A549 (cell line): ENCODE measurements at regions of chr11 and their contacts with region 1.

Region 1: GRCh38 chr11:44556735-44557409 is 8.6 kb upstream of the CD82 start:
- DNase-seq: peak in 1 of 2 experiments; percentile 64
- ATAC-seq: peak; percentile 73 to 94; a peak in 4 of 6 replicates
- H3K4me3 ChIP-seq: no peak overlapping the region
- H3K27ac ChIP-seq: no peak overlapping the region
- H3K4me1 ChIP-seq: no peaks in the 10 kb centered on the region
- CTCF ChIP-seq: peak; percentile 83
- EP300 ChIP-seq: no peak
- POLR2A ChIP-seq: no peak
- RAD21 ChIP-seq: peak; percentile 91 to 93

Region 2: DNA sequence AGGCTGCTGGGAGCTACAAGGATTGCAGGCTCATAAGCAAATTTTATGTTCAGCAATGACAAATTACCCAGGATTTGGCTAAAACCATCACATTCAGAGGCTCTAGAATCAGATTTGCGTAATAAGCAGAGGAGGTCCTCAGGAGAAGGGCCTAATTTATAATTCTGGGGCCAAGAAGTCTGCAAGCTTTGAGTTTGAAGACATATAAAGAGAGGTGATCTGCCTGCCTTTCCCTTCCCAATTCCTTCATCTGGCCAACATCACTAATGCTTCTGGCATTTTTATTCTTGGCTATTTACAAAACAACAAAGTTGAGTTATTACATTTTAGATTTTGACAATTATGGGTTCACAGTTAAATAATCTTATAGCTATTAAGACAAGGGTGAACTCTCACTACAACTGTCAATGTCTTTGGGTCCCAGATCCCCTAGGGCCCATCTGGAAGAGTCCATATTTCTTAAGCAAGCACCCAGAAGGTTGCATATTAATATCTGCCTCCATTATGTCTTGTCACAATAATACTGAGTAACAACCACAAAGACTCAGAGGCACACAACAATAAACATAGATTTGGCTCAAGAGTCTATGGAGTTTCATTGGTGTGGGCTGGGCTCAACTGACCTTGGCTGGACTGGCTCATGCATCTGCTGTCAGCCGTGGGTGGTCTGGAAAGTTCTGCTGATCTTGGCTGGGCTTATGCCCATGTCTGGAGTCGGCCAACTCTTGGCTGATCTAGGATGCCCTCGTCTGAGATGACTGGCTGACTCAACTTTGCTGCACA is 58.6 kb before region 1 on chr11:
- CTCF ChIA-PET with region 1: no interaction called
- POLR2A ChIA-PET with region 1: no interaction called
- DNase-seq: no peak
- ATAC-seq: no peak
- H3K4me3 ChIP-seq: no peak overlapping the region
- H3K27ac ChIP-seq: no peak overlapping the region
- H3K4me1 ChIP-seq: no peaks in the 10 kb centered on the region
- CTCF ChIP-seq: no peak
- EP300 ChIP-seq: no peak
- POLR2A ChIP-seq: no peak
- RAD21 ChIP-seq: no peak

Region 3: DNA sequence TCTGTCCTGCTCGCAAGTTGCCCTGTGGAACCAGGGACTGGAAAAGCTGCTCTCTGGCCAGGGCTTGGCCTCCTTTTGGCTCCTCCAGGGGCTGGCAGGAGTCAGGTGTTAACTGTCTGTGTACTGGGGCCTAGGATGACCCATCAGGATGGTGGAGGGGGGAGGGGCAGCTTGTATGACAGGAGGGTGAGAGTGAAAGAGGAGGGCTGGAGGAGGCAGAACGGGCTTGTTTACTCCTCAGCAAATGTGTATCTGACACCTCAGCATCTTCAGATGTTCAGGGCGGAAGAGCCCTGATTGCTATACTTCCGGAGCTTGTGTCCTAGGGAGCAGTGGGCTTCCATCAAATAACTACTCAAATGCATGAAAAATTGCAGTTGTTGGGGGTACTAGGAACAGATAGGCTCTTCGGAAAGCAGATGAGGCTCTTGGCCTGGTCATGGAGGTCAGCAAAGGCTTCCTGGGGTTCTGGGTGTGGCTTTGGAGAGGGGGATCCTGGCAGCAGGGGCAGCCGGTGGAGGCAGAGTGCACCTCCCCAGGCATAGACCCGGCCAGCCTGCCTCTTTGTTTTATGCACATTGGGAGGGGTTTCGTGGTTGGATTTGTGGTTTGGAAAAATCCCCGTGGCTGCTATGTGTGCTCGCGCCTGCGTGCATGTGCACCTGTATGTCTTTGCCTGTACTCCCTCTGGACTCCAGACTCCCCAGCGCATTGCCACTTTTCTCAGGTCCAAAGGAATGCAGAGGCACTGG is 39.8 kb after region 1 on chr11:
- CTCF ChIA-PET with region 1: interaction called, 40 read pairs
- POLR2A ChIA-PET with region 1: no interaction called
- DNase-seq: no peak
- ATAC-seq: no peak
- H3K4me3 ChIP-seq: no peak overlapping the region
- H3K27ac ChIP-seq: no peak overlapping the region
- H3K4me1 ChIP-seq: peaks cover 8% of the 10 kb centered on the region
- CTCF ChIP-seq: no peak
- EP300 ChIP-seq: no peak
- POLR2A ChIP-seq: no peak
- RAD21 ChIP-seq: no peak

Region 4: DNA sequence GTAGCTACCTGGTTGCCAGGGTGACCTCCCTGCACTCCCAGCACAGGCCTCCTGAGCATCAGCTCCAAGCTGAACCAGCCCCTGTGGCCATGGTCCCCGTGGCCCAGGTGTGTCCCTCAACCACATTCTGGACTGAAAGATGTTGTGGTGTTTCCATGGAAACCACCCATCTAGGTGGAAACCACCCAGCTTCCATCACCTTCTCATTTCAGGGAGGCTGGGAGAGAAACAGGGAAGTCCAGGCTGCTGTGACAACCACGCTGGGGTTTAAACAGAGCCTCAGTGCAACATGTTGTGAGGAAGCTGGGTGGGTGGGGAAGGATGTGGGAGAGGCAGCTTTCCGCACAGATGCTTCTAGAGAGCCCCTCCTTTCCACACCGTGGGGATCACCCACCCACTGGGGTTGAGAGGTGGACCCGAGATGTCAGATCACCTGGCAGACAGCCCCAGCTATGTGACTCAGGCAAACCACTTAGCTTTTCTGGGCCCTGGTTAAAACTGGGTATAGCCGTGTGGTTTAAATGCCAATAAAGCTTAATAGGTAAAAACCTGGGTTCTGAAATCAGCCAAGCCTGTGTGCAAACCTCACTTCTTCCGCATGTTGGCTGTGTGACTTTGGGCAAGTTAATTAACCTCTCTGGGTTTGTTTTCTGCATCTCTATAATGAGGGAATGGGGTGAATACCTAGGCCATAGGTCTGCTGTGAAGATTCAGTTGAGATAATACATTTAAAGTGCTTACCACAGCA is 55.0 kb after region 1 on chr11:
- CTCF ChIA-PET with region 1: interaction called, 865 read pairs
- POLR2A ChIA-PET with region 1: interaction called, 4 read pairs
- DNase-seq: no peak
- ATAC-seq: no peak
- H3K4me3 ChIP-seq: no peak overlapping the region
- H3K27ac ChIP-seq: no peak overlapping the region
- H3K4me1 ChIP-seq: peaks cover 12% of the 10 kb centered on the region; the same call in 2 of the 3 replicates
- CTCF ChIP-seq: no peak
- EP300 ChIP-seq: no peak
- POLR2A ChIP-seq: no peak
- RAD21 ChIP-seq: no peak